ENCODE measurements at regions of chr5 and their contacts with region 1.

Region 1: DNA sequence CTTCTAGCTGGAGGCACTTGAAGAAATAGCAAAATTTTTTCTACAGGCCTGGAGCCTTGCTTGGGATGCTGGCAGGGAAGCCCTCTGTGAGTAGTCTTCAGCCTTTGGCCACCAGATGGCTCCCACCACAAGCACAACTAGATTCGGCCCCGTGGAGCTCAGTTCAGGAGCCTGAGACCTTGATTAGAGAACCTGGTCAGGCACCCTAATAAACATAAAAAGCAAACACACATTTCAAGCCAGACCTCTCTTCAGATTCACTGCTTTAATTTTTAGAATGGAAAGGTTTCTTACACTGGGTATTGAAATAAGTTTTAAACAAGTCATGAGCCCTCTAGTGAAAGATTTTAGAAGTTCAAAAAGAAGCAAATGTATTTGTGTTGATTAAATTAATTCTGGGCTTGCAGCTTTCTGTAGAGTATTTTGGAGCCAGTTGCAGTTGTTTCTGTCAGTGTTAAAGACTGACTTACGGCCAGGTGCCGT is 41.4 kb downstream of the GLRX start:
- DNase-seq: no peak
- H3K4me3 ChIP-seq: no peak overlapping the region
- CTCF ChIP-seq: peak; percentile 86

Region 2: GRCh38 chr5:95572016-95572415 is 209.1 kb before region 1 on chr5:
- CTCF ChIA-PET with region 1: no interaction called
- POLR2A ChIA-PET with region 1: no interaction called
- DNase-seq: no peak
- H3K4me3 ChIP-seq: no peak overlapping the region
- CTCF ChIP-seq: no peak

Region 3: GRCh38 chr5:95646554-95647431 is 134.3 kb before region 1 on chr5 and contains the start of gene RFESD:
- CTCF ChIA-PET with region 1: interaction called, 101 read pairs
- POLR2A ChIA-PET with region 1: no interaction called
- DNase-seq: peak; percentile 58
- H3K4me3 ChIP-seq: peak within 1 kb of the TSS; percentile 63
- CTCF ChIP-seq: peak; percentile 18

Region 4: GRCh38 chr5:95669540-95669939 is 111.6 kb before region 1 on chr5:
- CTCF ChIA-PET with region 1: interaction called, 41 read pairs
- POLR2A ChIA-PET with region 1: no interaction called
- DNase-seq: peak; percentile 98
- H3K4me3 ChIP-seq: no peak overlapping the region
- CTCF ChIP-seq: no peak

Region 5: GRCh38 chr5:95794070-95794516 is 13.0 kb after region 1 on chr5:
- CTCF ChIA-PET with region 1: interaction called, 57 read pairs
- POLR2A ChIA-PET with region 1: no interaction called
- DNase-seq: peak; percentile 42
- H3K4me3 ChIP-seq: no peak overlapping the region
- CTCF ChIP-seq: no peak

Region 6: GRCh38 chr5:95822542-95823181 is 41.5 kb after region 1 on chr5 and contains the start of gene GLRX:
- CTCF ChIA-PET with region 1: interaction called, 30 read pairs
- POLR2A ChIA-PET with region 1: interaction called, 4 read pairs
- DNase-seq: peak; percentile 86
- H3K4me3 ChIP-seq: peak within 1 kb of the TSS; percentile 83
- CTCF ChIP-seq: no peak

Region 7: GRCh38 chr5:95853490-95853889 is 72.3 kb after region 1 on chr5:
- CTCF ChIA-PET with region 1: interaction called, 318 read pairs
- POLR2A ChIA-PET with region 1: no interaction called
- DNase-seq: no peak
- H3K4me3 ChIP-seq: no peak overlapping the region
- CTCF ChIP-seq: no peak